T-cell (primary cell): ENCODE measurements at regions of chr6 and their contacts with region 1.

Region 1: GRCh38 chr6:158026054-158026900 is 44.6 kb downstream of the SYNJ2 start:
- DNase-seq: peak; percentile 66 to 88 (median 73)
- ATAC-seq: peak; percentile 79 to 82 (median 81)
- H3K4me3 ChIP-seq: peak overlapping the region in 1 of 2 donors; percentile 44
- H3K4me3 Mint-ChIP-seq: peak overlapping the region; percentile 74 to 78 (median 76)
- H3K27ac ChIP-seq: peak overlapping the region; percentile 93
- H3K27ac Mint-ChIP-seq: peak overlapping the region; percentile 93 to 95
- H3K4me1 ChIP-seq: peaks cover 14 to 37% of the 10 kb centered on the region in 2 experiments
- H3K4me1 Mint-ChIP-seq: peaks cover 33 to 43% (median 34%) of the 10 kb centered on the region in 3 donors
- H3K27me3 ChIP-seq: no peaks in the 10 kb centered on the region
- H3K27me3 Mint-ChIP-seq: no peaks in the 10 kb centered on the region

Region 2: GRCh38 chr6:157764178-157765033 is 261.9 kb before region 1 on chr6:
- CTCF ChIA-PET with region 1: interaction called in 1 of 2 experiments, 12 read pairs
- POLR2A ChIA-PET with region 1: no interaction called
- DNase-seq: peak; percentile 57 to 90 (median 77)
- ATAC-seq: peak; percentile 77 to 79 (median 78)
- H3K4me3 ChIP-seq: peak overlapping the region; percentile 25 to 26
- H3K4me3 Mint-ChIP-seq: peak overlapping the region; percentile 49 to 72 (median 64)
- H3K27ac ChIP-seq: peak overlapping the region; percentile 74
- H3K27ac Mint-ChIP-seq: peak overlapping the region; percentile 85 to 93
- H3K4me1 ChIP-seq: peaks cover 50 to 68% of the 10 kb centered on the region in 2 experiments
- H3K4me1 Mint-ChIP-seq: peaks cover 69 to 86% (median 82%) of the 10 kb centered on the region in 3 donors
- H3K27me3 ChIP-seq: no peaks in the 10 kb centered on the region
- H3K27me3 Mint-ChIP-seq: peaks cover 0 to 2% of the 10 kb centered on the region in 2 donors

Region 3: DNA sequence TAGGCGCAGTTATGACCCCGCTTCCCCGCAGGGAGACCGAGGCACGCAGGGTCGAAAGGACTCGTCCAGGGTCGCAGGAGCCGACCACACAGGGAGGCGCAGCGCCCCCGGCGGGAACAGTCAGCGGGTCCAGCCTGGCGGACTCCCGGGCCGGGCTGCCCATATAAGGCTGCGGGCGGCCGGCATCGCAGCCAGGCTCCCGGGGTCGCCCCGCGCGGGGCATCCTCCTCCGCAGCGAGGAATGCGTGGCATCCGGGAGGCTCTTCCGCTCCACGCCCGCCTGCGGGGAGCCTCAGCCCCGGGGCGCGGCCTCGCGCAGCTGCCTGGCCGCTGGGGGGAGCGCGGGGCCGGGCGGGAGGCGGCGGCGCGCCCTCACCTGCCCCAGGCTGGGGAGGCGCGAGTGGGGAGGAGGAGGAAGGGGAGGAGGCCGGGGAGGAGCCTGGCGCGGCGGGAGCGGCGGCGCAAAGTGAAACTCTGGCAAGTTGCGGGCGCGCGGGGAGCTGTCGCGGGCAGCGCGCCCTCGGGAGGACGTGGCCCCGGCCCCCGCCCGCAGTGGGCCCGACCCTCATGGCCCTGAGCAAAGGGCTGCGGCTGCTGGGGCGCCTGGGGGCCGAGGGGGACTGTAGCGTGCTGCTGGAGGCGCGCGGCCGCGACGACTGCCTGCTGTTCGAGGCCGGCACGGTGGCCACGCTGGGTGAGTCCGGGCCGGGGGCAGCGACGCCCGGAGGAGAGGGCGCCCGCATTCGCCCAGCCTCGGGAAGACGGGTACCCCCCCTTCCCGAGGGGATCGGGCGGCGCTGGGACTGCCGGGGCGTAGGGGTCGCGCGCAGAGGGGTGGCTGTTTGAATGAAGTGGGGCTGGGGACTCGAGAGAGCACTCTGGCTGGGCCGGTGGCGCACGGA is 44.6 kb before region 1 on chr6 and contains the start of gene SYNJ2:
- CTCF ChIA-PET with region 1: interaction called, 3 to 29 read pairs
- POLR2A ChIA-PET with region 1: interaction called in 1 of 2 experiments, 5 read pairs
- DNase-seq: peak; percentile 63 to 90 (median 79)
- ATAC-seq: peak; percentile 89 to 93 (median 92)
- H3K4me3 ChIP-seq: peak within 1 kb of the TSS; percentile 75 to 81
- H3K4me3 Mint-ChIP-seq: peak within 1 kb of the TSS; percentile 74 to 90 (median 85)
- H3K27ac ChIP-seq: peak within 1 kb of the TSS; percentile 51
- H3K27ac Mint-ChIP-seq: peak within 1 kb of the TSS; percentile 74 to 81
- H3K4me1 ChIP-seq: peaks cover 32 to 49% of the 10 kb centered on the region in 2 experiments
- H3K4me1 Mint-ChIP-seq: peaks cover 44 to 53% (median 46%) of the 10 kb centered on the region in 3 donors
- H3K27me3 ChIP-seq: no peaks in the 10 kb centered on the region
- H3K27me3 Mint-ChIP-seq: no peaks in the 10 kb centered on the region
- total RNA-seq, gene SYNJ2: 20.0 to 37.0 (median 22.3) TPM

Region 4: GRCh38 chr6:158009114-158009891 is 17.0 kb before region 1 on chr6:
- CTCF ChIA-PET with region 1: interaction called, 4 to 10 read pairs
- POLR2A ChIA-PET with region 1: interaction called in 1 of 2 experiments, 3 read pairs
- DNase-seq: peak in 19 of 35 experiments; percentile 11 to 41 (median 23)
- ATAC-seq: peak; percentile 73 to 84 (median 79)
- H3K4me3 ChIP-seq: peak overlapping the region; percentile 30 to 49
- H3K4me3 Mint-ChIP-seq: peak overlapping the region; percentile 70 to 85 (median 74)
- H3K27ac ChIP-seq: peak overlapping the region; percentile 57
- H3K27ac Mint-ChIP-seq: peak overlapping the region; percentile 91 to 95
- H3K4me1 ChIP-seq: peaks cover 45 to 60% of the 10 kb centered on the region in 2 experiments
- H3K4me1 Mint-ChIP-seq: peaks cover 78 to 95% (median 84%) of the 10 kb centered on the region in 3 donors
- H3K27me3 ChIP-seq: no peaks in the 10 kb centered on the region
- H3K27me3 Mint-ChIP-seq: no peaks in the 10 kb centered on the region